ENCODE measurements at regions of chr7 and their contacts with region 1.

Region 1: GRCh38 chr7:131400833-131401593 is 73.3 kb downstream of the MKLN1 start:
- DNase-seq: no peak
- ATAC-seq: no peak
- H3K4me3 ChIP-seq: no peak overlapping the region
- H3K27ac ChIP-seq: no peak overlapping the region
- H3K4me1 ChIP-seq: no peaks in the 10 kb centered on the region
- H3K27me3 ChIP-seq: no peaks in the 10 kb centered on the region
- CTCF ChIP-seq: no peak
- EP300 ChIP-seq: no peak
- POLR2A ChIP-seq: no peak
- RAD21 ChIP-seq: no peak

Region 2: DNA sequence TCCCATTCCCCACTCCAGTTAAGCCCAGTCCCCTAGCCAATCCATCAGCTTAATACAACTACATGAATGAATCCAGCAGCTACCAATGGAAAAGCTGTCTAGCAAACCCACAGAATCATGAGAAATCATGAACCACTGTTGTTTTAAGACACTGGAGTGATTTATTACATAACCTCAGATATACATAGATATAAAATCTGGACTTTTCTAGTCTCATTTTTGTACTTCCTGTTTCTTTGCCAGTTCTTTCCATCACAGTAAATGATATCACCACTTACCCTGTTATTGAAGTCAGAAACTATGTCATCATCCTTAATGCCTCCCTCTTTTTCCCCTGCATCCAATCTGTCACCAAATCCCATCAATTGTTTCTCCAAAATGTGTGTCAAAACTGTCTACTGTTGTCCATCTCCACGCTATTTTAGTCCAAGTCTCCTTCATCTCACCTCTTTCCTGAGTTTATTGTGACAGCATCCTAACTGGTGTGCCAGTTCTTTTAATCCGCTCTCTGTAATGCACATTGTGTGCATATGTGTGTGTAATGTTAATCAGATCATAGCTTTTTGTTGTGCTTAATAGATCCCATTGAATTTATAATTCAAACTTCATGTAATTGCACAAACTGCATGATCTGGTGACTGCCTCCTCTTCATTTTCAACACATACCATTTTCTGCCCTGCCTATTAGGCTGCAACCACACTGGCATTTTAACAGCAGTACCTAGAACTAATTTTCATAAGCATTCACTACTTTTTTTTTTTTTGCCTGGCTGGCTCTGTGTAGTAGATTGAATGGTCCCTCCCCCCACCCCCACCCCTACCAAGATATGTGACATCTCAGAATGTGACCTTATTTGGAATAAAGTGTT is 17.4 kb before region 1 on chr7:
- CTCF ChIA-PET with region 1: interaction called, 6 read pairs
- POLR2A ChIA-PET with region 1: interaction called, 11 read pairs
- RAD21 ChIA-PET with region 1: no interaction called
- SMC1A ChIA-PET with region 1: interaction called, 9 read pairs
- in situ Hi-C with region 1: no loop called
- intact Hi-C with region 1: no loop called
- DNase-seq: no peak
- ATAC-seq: no peak; the same call in 2 of the 3 replicates
- H3K4me3 ChIP-seq: no peak overlapping the region
- H3K27ac ChIP-seq: no peak overlapping the region
- H3K4me1 ChIP-seq: no peaks in the 10 kb centered on the region
- H3K27me3 ChIP-seq: no peaks in the 10 kb centered on the region
- CTCF ChIP-seq: no peak
- EP300 ChIP-seq: no peak
- POLR2A ChIP-seq: no peak
- RAD21 ChIP-seq: no peak

Region 3: DNA sequence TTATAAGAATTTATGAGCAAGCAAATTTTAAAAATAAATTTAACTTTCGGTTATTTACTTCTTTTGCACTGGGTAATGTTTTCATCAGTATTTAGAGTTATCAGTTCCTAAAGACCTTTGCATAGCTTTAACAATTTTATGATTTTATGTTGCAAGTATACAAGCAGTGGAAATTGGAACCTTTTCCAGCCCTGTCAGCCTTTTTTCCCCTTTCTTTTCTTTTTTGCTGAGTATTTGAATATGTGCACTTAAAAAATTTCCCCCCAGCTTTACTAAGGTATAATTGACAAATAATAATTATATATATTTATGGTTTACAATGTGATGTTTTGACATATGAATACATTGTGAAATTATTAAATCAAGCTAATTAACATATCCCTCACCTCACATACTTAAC is 10.7 kb before region 1 on chr7:
- CTCF ChIA-PET with region 1: interaction called, 6 read pairs
- POLR2A ChIA-PET with region 1: interaction called, 11 read pairs
- RAD21 ChIA-PET with region 1: no interaction called
- SMC1A ChIA-PET with region 1: interaction called, 15 read pairs
- in situ Hi-C with region 1: no loop called
- intact Hi-C with region 1: no loop called
- DNase-seq: no peak
- ATAC-seq: no peak
- H3K4me3 ChIP-seq: no peak overlapping the region
- H3K27ac ChIP-seq: no peak overlapping the region
- H3K4me1 ChIP-seq: no peaks in the 10 kb centered on the region
- H3K27me3 ChIP-seq: no peaks in the 10 kb centered on the region
- CTCF ChIP-seq: no peak
- EP300 ChIP-seq: no peak
- POLR2A ChIP-seq: no peak
- RAD21 ChIP-seq: no peak

Region 4: DNA sequence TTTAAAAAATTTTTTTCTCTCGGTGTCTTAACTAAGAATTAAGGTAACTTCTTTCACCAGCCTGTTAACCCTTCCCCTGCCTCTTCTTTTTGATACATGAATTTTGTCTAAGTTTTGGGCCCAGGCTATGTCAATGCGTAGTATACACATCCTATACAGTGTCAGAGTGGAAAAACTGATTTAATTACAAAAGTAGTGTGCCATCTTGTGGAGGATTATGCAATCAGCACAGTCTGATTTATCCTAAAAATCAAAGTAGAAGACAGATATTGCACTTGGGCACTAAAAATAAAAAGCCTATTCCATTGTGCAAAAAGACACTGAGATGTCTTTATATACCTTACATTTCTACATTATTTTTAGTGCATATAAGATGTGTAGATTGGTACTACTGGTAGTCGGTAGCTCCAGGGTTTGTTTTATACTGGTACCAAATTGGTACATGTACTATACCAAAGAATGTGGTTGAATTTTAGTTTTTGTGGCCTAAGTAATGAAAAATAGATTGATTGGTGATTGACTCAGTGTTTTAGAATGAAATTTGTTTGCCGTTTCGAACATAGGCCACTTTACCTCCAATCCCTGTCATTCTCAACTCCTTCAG is 23.3 kb after region 1 on chr7:
- CTCF ChIA-PET with region 1: interaction called, 5 read pairs
- POLR2A ChIA-PET with region 1: no interaction called
- RAD21 ChIA-PET with region 1: no interaction called
- SMC1A ChIA-PET with region 1: no interaction called
- in situ Hi-C with region 1: no loop called
- intact Hi-C with region 1: loop called (anchors 2 kb)
- DNase-seq: peak; percentile 4
- ATAC-seq: peak; percentile 87
- H3K4me3 ChIP-seq: no peak overlapping the region
- H3K27ac ChIP-seq: no peak overlapping the region
- H3K4me1 ChIP-seq: no peaks in the 10 kb centered on the region
- H3K27me3 ChIP-seq: no peaks in the 10 kb centered on the region
- CTCF ChIP-seq: peak; percentile 25 to 61 (median 55); a peak in 5 of 6 replicates
- EP300 ChIP-seq: no peak
- POLR2A ChIP-seq: no peak
- RAD21 ChIP-seq: peak; percentile 64

Measured in GM12878 (cell line).